ENCODE measurements at regions of chr4 and their contacts with region 1.

Region 1: GRCh38 chr4:180449395-180449956 is 1793.7 kb upstream of the TENM3 start:
- DNase-seq: peak; percentile 77
- H3K4me3 Mint-ChIP-seq: peak overlapping the region; percentile 19
- H3K27ac Mint-ChIP-seq: no peak overlapping the region
- H3K4me1 Mint-ChIP-seq: no peaks in the 10 kb centered on the region
- H3K27me3 Mint-ChIP-seq: no peaks in the 10 kb centered on the region
- CTCF ChIP-seq: peak; percentile 69

Region 2: GRCh38 chr4:180641495-180641894 is 192.0 kb after region 1 on chr4:
- CTCF ChIA-PET with region 1: interaction called, 8 read pairs
- POLR2A ChIA-PET with region 1: no interaction called
- intact Hi-C with region 1: loop called (anchors 1 kb)
- DNase-seq: peak; percentile 29
- H3K4me3 Mint-ChIP-seq: no peak overlapping the region
- H3K27ac Mint-ChIP-seq: no peak overlapping the region
- H3K4me1 Mint-ChIP-seq: no peaks in the 10 kb centered on the region
- H3K27me3 Mint-ChIP-seq: no peaks in the 10 kb centered on the region
- CTCF ChIP-seq: peak; percentile 13